HAP-1 (cell line): ENCODE measurements at regions of chr13 and their contacts with region 1.

Region 1: GRCh38 chr13:48126944-48127830 is 32.3 kb upstream of the MED4 start:
- DNase-seq: peak; percentile 62 to 83
- H3K4me3 ChIP-seq: no peak overlapping the region
- H3K4me1 ChIP-seq: peaks cover 4% of the 10 kb centered on the region
- H3K27me3 ChIP-seq: no peaks in the 10 kb centered on the region

Region 2: DNA sequence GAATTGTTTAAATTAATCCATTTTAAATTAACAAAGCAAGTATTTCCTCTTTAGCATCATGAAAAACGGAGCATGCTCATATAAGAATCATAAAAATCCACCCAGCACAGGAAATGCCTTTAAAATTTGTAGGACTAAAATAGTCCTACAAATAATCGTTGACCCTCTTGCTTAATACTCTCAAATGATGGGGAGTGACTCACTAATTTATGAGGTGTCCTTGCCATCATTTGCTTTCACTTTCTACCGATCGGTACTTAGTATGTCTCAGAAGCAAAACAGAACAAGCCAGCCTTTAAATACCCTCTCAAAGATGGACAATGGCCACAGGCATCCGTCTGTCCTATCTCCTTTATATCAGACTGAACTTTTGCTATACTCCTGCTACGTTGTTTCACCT is 223.4 kb before region 1 on chr13:
- in situ Hi-C with region 1: no loop called
- DNase-seq: no peak
- H3K4me3 ChIP-seq: no peak overlapping the region
- H3K4me1 ChIP-seq: no peaks in the 10 kb centered on the region
- H3K27me3 ChIP-seq: no peaks in the 10 kb centered on the region

Region 3: DNA sequence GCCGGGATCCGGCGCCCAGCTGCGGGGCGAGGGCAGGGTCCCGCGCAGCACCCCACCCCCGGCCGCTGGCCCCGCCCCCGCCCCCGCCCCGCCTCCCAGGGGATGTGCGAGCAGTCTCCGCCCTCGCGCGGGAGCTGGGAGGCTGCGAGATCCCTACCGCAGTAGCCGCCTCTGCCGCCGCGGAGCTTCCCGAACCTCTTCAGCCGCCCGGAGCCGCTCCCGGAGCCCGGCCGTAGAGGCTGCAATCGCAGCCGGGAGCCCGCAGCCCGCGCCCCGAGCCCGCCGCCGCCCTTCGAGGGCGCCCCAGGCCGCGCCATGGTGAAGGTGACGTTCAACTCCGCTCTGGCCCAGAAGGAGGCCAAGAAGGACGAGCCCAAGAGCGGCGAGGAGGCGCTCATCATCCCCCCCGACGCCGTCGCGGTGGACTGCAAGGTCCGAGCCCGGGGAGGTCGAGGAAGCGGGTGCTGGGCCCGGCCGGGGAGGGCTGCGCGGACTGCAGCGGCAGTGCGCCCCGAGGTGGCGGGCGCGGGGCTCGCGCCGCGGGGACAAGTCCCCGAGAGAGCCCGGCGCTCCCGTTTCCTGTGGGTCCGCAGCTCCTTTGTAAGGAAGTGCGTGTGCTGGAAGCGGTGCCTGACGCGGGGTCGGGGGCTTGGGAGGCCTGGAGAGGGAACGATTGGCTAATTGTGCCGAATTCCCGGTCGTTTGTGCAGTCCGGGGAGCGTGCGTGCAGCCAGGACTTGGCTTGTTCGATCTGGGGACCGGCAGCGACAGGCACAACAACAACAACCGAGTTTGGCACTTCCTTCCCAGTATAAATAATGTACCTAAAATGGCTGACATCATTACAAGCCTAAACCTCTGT is 106.1 kb after region 1 on chr13 and contains the start of gene ITM2B:
- in situ Hi-C with region 1: loop called (anchors 10 kb)
- DNase-seq: peak; percentile 71 to 80
- H3K4me3 ChIP-seq: peak within 1 kb of the TSS; percentile 79
- H3K4me1 ChIP-seq: peaks cover 29% of the 10 kb centered on the region
- H3K27me3 ChIP-seq: no peaks in the 10 kb centered on the region

Region 4: GRCh38 chr13:48595431-48596429 is 468.5 kb after region 1 on chr13:
- in situ Hi-C with region 1: loop called (anchors 25 kb)
- DNase-seq: peak; percentile 52 to 59
- H3K4me3 ChIP-seq: no peak overlapping the region
- H3K4me1 ChIP-seq: peaks cover 43% of the 10 kb centered on the region
- H3K27me3 ChIP-seq: no peaks in the 10 kb centered on the region

Region 5: GRCh38 chr13:49278211-49278610 is 1151.0 kb after region 1 on chr13:
- in situ Hi-C with region 1: no loop called
- DNase-seq: no peak
- H3K4me3 ChIP-seq: no peak overlapping the region
- H3K4me1 ChIP-seq: peaks cover 13% of the 10 kb centered on the region
- H3K27me3 ChIP-seq: no peaks in the 10 kb centered on the region